Adrenal gland (tissue), 19 donors: ENCODE measurements at regions of chr10 and their contacts with region 1.

Region 1: DNA sequence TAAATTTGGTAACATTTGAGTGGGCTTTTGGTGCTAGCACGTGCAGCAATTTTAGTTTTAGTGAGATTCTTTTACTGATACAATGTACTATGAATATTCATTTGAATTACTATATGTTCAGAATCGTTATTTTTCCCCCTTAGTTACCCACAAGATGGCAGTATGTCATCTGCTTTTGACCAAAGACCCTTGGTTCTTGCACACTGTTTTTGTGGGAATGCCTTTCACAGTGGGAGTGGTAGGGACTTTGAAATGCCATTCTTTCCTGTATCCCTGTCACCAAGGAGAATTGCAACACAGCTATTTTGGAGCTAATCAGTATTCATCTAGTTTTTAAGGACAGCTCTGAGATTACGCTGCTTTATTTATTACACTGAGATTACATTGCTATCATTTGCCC is 40.6 kb downstream of the SEC23IP start:
- DNase-seq: no peak
- H3K4me3 ChIP-seq: no peak overlapping the region
- H3K27ac ChIP-seq: no peak overlapping the region
- H3K4me1 ChIP-seq: peaks cover 23 to 25% of the 10 kb centered on the region in 2 donors
- H3K27me3 ChIP-seq: no peaks in the 10 kb centered on the region
- CTCF ChIP-seq: peak in 5 of 6 experiments; percentile 12 to 34 (median 21)
- POLR2A ChIP-seq: no peak

Region 2: GRCh38 chr10:120041807-120042559 is 108.8 kb after region 1 on chr10:
- intact Hi-C with region 1: no loop called
- DNase-seq: no peak
- H3K4me3 ChIP-seq: no peak overlapping the region
- H3K27ac ChIP-seq: no peak overlapping the region
- H3K4me1 ChIP-seq: no peaks in the 10 kb centered on the region
- H3K27me3 ChIP-seq: no peaks in the 10 kb centered on the region
- CTCF ChIP-seq: no peak
- POLR2A ChIP-seq: no peak

Region 3: GRCh38 chr10:120336911-120337540 is 403.8 kb after region 1 on chr10:
- intact Hi-C with region 1: loop called in 1 of 2 experiments (anchors 10 kb)
- DNase-seq: peak; percentile 22 to 75 (median 50)
- H3K4me3 ChIP-seq: no peak overlapping the region
- H3K27ac ChIP-seq: no peak overlapping the region
- H3K4me1 ChIP-seq: no peaks in the 10 kb centered on the region
- H3K27me3 ChIP-seq: peaks cover 5% of the 10 kb centered on the region
- CTCF ChIP-seq: peak; percentile 41 to 72 (median 60)
- POLR2A ChIP-seq: no peak